Posterior cingulate gyrus (tissue), 11 donors: ENCODE measurements at regions of chr13 and their contacts with region 1.

Region 1: GRCh38 chr13:33931397-33932311 is 113.7 kb downstream of the RFC3 start:
- DNase-seq: no peak

Region 2: DNA sequence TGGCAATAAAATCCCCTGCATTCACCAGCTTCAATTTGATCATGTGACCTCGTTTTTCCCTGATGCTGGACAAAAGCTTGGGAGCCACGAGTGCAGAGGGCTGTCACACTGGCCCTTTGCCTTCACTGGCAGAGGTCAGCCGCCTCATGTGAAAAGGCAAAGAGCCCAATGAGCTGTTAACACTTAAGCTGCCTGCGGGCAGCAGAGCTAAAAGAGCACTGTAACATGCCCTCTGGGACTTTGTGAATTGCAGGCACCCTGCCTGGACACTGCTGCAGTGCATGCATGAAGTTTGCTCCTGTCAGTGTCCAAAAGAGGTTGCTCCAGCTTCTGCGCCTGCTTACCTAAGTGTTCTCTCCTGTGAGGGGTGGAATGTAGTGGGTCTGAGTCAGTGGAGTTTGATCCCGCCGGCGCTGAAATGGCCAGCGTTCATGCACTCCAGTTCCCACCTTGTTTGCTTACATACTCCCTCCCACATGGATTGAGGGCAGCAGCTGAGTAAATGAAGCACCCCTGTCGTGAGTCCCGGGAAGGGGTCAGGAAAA is 80.0 kb after region 1 on chr13:
- intact Hi-C with region 1: no loop called
- DNase-seq: peak in 1 of 10 donors; percentile 71

Region 3: DNA sequence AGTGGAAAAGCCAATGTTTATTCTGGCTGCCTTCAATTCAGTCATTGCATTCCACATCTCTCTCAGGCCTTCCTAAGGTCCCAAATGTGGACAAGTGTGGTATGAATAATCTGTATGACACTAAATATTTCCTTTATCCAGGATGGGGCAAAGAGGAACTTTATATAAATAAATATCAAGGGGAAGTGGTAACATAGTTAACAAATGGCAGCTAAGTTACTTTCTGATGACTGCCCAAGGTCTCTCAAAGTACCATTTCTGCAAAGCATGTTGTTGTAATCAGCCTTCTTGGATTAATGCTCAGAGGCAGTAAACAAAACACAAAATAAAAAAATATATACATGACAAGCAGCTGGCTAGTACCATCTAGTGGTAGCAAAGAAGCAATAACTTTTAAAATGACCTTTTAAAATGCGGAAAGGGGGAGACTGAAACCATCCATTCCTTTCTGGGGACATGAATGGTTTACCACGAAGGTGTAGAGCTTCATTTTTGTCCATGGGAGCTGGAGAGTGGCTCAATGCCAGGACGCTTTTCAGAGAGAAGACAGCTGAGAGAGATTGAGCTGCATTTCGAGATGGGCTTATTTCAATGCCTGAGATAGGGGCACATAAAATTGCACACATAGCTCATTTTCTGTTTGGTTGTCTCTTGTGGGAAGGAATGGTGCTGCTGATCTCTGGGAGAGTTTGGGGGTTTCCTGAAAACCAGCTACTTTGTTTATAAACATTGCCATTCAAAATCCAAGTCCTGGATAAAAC is 145.5 kb after region 1 on chr13:
- intact Hi-C with region 1: loop called (anchors 10 kb)
- DNase-seq: no peak

Region 4: DNA sequence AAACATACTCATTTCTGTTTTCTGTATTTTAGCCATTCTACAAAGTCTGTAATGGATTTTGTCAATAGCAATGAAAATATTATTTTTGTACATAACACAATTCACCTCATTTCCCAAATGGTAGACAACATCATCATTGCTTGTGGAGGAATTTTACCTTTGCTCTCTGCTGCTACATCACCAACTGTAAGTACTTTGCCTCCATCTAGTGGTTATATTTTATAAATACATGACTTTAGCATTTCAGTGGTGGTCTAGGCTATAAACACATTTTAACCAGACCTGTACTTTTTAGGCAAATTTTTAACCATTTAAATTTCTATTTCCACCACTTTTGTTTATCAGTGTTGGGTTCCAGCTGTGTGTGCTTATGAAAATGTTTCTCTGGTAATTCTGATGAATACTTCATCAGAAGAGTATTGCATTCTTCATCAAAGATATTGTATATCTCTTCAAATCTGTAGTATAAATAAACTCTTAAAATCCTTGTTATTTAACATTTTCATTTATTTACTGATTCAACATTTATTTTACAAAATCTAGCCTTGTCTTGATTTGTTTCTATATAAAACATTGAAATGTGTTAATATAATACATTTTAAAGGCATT is 1232.8 kb after region 1 on chr13:
- intact Hi-C with region 1: loop called (anchors 5 kb)
- DNase-seq: no peak